GM12878 (cell line): ENCODE measurements at regions of chr1 and their contacts with region 1.

Region 1: DNA sequence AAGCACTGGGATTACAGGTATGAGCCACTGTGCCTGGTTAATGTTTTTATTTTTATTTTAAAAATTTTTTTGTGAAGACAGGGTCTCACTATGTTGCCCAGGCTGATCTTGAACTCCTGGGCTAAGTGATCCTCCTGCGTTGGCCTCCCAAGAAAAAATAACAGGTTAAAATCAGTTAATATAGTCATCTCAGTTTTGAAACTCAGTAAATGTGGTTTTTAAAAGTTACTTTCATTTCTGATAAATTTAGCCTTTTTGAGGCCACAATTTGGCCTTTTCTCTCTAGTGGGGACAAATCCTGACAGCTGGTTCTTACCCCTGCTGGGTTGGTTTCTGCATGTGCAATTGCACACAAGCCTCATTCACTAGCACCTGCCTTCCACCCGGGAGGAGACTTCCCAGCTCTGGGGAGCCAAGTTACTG is 13.3 kb downstream of the PMF1 start:
- DNase-seq: peak; percentile 90
- ATAC-seq: peak; percentile 87
- H3K4me3 ChIP-seq: no peak overlapping the region
- H3K27ac ChIP-seq: peak overlapping the region; percentile 98
- H3K4me1 ChIP-seq: peaks cover 25% of the 10 kb centered on the region
- H3K27me3 ChIP-seq: no peaks in the 10 kb centered on the region
- CTCF ChIP-seq: no peak
- EP300 ChIP-seq: peak; percentile 79 to 92
- POLR2A ChIP-seq: no peak; the same call in 1 of the 2 replicates
- RAD21 ChIP-seq: no peak

Region 2: GRCh38 chr1:156096640-156097391 is 129.3 kb before region 1 on chr1:
- CTCF ChIA-PET with region 1: interaction called, 44 read pairs
- POLR2A ChIA-PET with region 1: interaction called, 5 read pairs
- RAD21 ChIA-PET with region 1: interaction called, 11 read pairs
- SMC1A ChIA-PET with region 1: interaction called, 19 read pairs
- in situ Hi-C with region 1: loop called (anchors 5 kb)
- intact Hi-C with region 1: no loop called
- DNase-seq: peak; percentile 93
- ATAC-seq: peak; percentile 87
- H3K4me3 ChIP-seq: no peak overlapping the region
- H3K27ac ChIP-seq: peak overlapping the region; percentile 79
- H3K4me1 ChIP-seq: peaks cover 38% of the 10 kb centered on the region
- H3K27me3 ChIP-seq: no peaks in the 10 kb centered on the region
- CTCF ChIP-seq: peak; percentile 97 to 99 (median 97)
- EP300 ChIP-seq: peak; percentile 94 to 97
- POLR2A ChIP-seq: no peak
- RAD21 ChIP-seq: peak; percentile 84

Region 3: GRCh38 chr1:156154317-156154749 is 71.8 kb before region 1 on chr1:
- CTCF ChIA-PET with region 1: interaction called, 502 read pairs
- POLR2A ChIA-PET with region 1: interaction called, 84 read pairs
- RAD21 ChIA-PET with region 1: interaction called, 361 read pairs
- SMC1A ChIA-PET with region 1: interaction called, 411 read pairs
- in situ Hi-C with region 1: loop called (anchors 5 kb)
- intact Hi-C with region 1: no loop called
- DNase-seq: peak; percentile 81
- ATAC-seq: peak; percentile 80
- H3K4me3 ChIP-seq: peak overlapping the region; percentile 94
- H3K27ac ChIP-seq: peak overlapping the region; percentile 82
- H3K4me1 ChIP-seq: peaks cover 88% of the 10 kb centered on the region
- H3K27me3 ChIP-seq: no peaks in the 10 kb centered on the region
- CTCF ChIP-seq: peak in 1 of 3 experiments; percentile 9; a peak in 1 of 6 replicates
- EP300 ChIP-seq: no peak
- POLR2A ChIP-seq: peak; percentile 65
- RAD21 ChIP-seq: no peak

Region 4: DNA sequence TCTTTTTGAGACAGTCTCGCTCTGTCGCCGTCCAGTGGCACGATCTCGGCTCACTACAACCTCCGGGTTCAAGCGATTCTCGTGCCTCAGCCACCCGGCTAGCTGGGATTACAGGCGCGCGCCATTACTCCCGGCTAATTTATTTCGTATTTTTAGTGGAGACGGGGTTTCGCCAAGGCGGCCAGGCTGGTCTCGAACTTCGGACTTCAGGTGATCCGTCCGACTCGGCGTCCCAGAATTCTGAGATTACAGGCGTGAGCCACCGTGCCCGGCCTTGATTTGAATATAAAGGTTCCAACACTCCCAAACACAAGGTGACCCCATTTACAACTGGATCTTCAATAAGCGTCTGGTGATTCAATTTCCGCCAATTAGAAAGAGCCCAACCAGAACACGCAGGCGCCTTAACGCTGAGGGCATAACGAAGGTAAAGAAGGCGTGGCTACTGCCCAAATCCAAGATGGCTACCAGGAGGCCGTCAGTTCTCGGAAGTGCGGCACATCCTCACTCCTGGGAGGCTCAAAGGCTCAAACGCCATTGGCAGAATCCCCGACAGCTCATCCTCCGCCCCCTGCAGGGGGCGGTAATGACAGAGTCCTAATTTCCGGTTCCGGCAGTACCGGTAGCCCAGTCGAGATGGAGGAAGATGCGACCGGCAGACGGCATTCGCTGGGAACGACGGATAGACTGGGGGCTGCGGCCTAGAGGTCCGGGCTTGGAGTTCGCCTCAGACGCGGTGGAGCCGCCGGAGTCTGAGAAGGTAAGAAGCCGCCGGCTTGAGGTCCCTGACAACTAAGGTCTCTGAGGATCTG is 32.4 kb before region 1 on chr1 and contains the start of gene SLC25A44:
- CTCF ChIA-PET with region 1: interaction called, 76 read pairs
- POLR2A ChIA-PET with region 1: interaction called, 4 read pairs
- RAD21 ChIA-PET with region 1: interaction called, 44 read pairs
- SMC1A ChIA-PET with region 1: interaction called, 39 read pairs
- in situ Hi-C with region 1: no loop called
- intact Hi-C with region 1: no loop called
- DNase-seq: peak; percentile 100
- ATAC-seq: peak; percentile 96
- H3K4me3 ChIP-seq: peak within 1 kb of the TSS; percentile 100
- H3K27ac ChIP-seq: peak within 1 kb of the TSS; percentile 87
- H3K4me1 ChIP-seq: peaks cover 6% of the 10 kb centered on the region
- H3K27me3 ChIP-seq: no peaks in the 10 kb centered on the region
- CTCF ChIP-seq: peak; percentile 35 to 48 (median 45); a peak in 5 of 6 replicates
- EP300 ChIP-seq: no peak
- POLR2A ChIP-seq: peak; percentile 89
- RAD21 ChIP-seq: no peak
- polyA plus RNA-seq, gene SLC25A44: 7.1 to 9.2 TPM

Region 5: GRCh38 chr1:156212833-156213643 is 13.1 kb before region 1 on chr1 and contains the start of gene PMF1:
- CTCF ChIA-PET with region 1: interaction called, 45 read pairs
- POLR2A ChIA-PET with region 1: interaction called, 34 read pairs
- RAD21 ChIA-PET with region 1: interaction called, 17 read pairs
- SMC1A ChIA-PET with region 1: interaction called, 26 read pairs
- in situ Hi-C with region 1: no loop called
- intact Hi-C with region 1: no loop called
- DNase-seq: peak; percentile 88
- ATAC-seq: peak; percentile 99
- H3K4me3 ChIP-seq: peak within 1 kb of the TSS; percentile 96
- H3K27ac ChIP-seq: peak within 1 kb of the TSS; percentile 99
- H3K4me1 ChIP-seq: peaks cover 10% of the 10 kb centered on the region
- H3K27me3 ChIP-seq: no peaks in the 10 kb centered on the region
- CTCF ChIP-seq: 0 out of 6 replicates have a peak, but pooled peaks of 1 of the 3 experiments have one; percentile 1
- EP300 ChIP-seq: no peak
- POLR2A ChIP-seq: peak; percentile 94
- RAD21 ChIP-seq: no peak
- polyA plus RNA-seq, gene PMF1: 6.7 to 17.6 TPM

Region 6: DNA sequence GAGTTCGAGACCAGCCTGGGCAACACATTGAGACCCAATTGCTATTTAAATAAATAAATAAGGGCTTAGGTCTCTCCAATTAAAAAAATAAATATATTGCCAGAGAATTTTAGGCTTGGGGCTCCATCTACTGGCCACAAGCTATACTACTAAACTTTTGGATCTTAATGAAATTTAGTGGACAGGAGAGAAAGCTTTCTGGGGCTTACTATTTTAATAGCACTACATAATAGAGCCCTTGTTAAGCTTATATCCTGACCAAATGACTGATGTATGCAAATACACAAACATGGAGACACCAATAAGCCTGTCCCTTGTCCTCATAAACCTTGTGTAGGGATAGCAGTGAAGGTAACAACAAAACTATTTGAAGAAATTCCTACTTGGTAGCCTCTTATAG is 93.5 kb after region 1 on chr1:
- CTCF ChIA-PET with region 1: interaction called, 18 read pairs
- POLR2A ChIA-PET with region 1: interaction called, 6 read pairs
- RAD21 ChIA-PET with region 1: interaction called, 30 read pairs
- SMC1A ChIA-PET with region 1: interaction called, 4 read pairs
- in situ Hi-C with region 1: no loop called
- intact Hi-C with region 1: no loop called
- DNase-seq: no peak
- ATAC-seq: no peak
- H3K4me3 ChIP-seq: no peak overlapping the region
- H3K27ac ChIP-seq: no peak overlapping the region
- H3K4me1 ChIP-seq: no peaks in the 10 kb centered on the region
- H3K27me3 ChIP-seq: no peaks in the 10 kb centered on the region
- CTCF ChIP-seq: peak; percentile 41 to 51 (median 46)
- EP300 ChIP-seq: no peak
- POLR2A ChIP-seq: no peak
- RAD21 ChIP-seq: peak; percentile 64

Region 7: DNA sequence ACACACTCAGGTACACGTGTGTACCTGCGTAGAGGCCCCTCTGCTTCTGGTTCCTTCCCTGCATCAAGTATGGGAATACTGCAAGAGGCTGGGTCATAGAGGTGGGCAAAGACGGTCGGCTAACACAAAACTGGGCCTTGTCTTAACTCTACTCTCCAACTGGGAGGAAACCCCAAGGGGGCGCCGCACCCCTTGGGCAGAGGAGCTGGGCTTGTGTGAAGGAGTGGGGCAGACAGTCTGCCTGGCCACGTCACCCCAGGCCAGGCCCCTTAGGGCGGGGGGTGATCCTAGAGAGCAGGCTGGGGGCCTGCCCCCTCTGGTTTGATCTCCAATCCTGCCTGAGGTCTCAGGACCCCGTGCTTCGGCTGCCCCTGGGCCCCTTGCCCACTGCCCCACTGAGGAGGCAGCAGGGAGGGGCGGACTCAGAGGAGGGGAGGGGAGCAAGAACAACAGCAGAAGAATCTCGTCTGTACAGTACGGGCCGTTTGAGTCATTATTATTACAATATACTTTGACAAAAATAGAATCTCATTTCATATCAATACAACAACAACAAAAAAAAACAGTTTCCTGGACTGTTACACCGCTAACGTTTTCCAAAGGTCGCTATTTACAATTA is 239.7 kb after region 1 on chr1:
- CTCF ChIA-PET with region 1: no interaction called
- POLR2A ChIA-PET with region 1: no interaction called
- RAD21 ChIA-PET with region 1: no interaction called
- SMC1A ChIA-PET with region 1: no interaction called
- in situ Hi-C with region 1: no loop called
- intact Hi-C with region 1: no loop called
- DNase-seq: no peak
- ATAC-seq: peak; percentile 40
- H3K4me3 ChIP-seq: no peak overlapping the region
- H3K27ac ChIP-seq: no peak overlapping the region
- H3K4me1 ChIP-seq: no peaks in the 10 kb centered on the region
- H3K27me3 ChIP-seq: no peaks in the 10 kb centered on the region
- CTCF ChIP-seq: peak; percentile 12 to 25 (median 19); a peak in 3 of 6 replicates
- EP300 ChIP-seq: no peak
- POLR2A ChIP-seq: no peak
- RAD21 ChIP-seq: peak; percentile 49